ENCODE measurements at regions of chr4 and their contacts with region 1.

Region 1: GRCh38 chr4:70734168-70734954 is 12.6 kb downstream of the RUFY3 start:
- DNase-seq: peak in 9 of 10 donors; percentile 12 to 77 (median 45)
- ATAC-seq: peak; percentile 88 to 90
- H3K4me3 Mint-ChIP-seq: peak overlapping the region; percentile 66 to 81 (median 74)
- H3K27ac Mint-ChIP-seq: peak overlapping the region; percentile 51 to 93 (median 88)
- H3K4me1 Mint-ChIP-seq: peaks cover 15 to 53% (median 53%) of the 10 kb centered on the region in 4 donors
- H3K27me3 Mint-ChIP-seq: no peaks in the 10 kb centered on the region

Region 2: DNA sequence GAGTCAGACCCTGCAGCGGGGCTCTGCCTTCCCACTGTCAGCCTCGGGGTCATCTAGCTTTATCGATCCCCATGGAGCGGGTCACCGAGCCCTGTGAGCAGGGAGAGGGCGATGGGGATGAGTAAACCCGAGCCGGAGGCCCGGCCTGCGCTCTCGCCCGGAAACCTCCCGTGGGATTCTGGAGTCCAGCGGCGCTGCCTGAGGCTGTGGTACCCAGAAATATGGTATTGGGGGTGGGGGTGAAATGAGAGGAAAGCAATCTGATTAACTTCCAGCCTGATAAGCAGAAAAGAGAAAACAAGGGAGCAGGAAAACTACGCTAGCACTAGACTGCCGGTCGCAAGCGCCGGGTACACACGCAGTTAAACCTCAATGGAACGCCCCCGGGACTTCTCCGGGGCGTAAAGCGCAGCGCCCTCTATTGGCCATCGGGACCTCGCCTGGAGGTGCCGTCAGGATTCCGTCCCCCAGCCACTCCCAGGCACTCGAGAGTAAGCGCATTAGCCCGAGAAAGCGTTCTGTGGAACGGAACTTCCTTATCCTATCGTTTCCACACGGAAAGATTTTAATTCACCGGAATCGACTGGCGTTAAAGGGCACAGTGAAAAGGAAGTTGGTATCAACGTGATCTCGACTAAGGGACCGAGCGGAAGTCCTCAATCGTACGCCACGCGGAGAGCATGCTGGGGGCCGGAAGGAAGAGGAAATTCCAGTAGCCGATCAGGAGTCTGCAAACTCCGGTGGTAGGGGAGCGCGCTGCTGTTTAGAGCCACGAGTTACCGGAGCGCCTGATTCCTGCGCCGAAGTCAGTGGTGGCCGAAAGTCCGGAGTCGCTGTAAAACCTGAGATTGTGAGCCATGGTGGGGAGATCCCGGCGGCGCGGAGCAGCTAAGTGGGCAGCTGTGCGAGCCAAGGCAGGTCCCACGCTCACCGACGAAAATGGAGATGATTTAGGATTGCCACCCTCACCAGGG is 46.3 kb before region 1 on chr4 and contains the start of gene UTP3:
- POLR2A ChIA-PET with region 1: interaction called, 47 read pairs
- DNase-seq: peak; percentile 87 to 95 (median 91)
- ATAC-seq: peak; percentile 87 to 91
- H3K4me3 Mint-ChIP-seq: peak within 1 kb of the TSS; percentile 95 to 100 (median 98)
- H3K27ac Mint-ChIP-seq: peak within 1 kb of the TSS; percentile 98 to 100 (median 99)
- H3K4me1 Mint-ChIP-seq: peaks cover 19 to 52% (median 40%) of the 10 kb centered on the region in 4 donors
- H3K27me3 Mint-ChIP-seq: no peaks in the 10 kb centered on the region
- polyA plus RNA-seq, gene UTP3: 9.7 to 20.3 (median 13.9) TPM

Region 3: DNA sequence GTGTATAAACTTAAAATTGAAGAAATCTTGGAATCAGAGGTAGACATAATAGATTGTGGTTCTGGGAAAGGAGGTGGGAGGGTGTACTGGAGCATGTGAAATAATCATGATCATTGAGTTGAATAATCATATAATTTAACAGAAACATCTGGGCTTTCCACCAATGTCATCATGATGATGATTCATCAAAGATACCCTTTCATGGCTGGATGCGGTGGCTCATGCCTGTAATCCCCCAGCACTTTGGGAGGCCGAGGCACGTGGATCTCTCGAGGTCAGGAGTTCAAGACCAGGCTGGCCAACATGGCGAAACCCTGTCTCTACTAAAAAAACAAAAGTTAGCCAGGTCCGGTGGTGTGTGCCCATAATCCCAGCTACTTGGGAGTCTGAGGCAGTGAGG is 19.3 kb before region 1 on chr4:
- POLR2A ChIA-PET with region 1: interaction called, 11 read pairs
- DNase-seq: no peak
- ATAC-seq: no peak
- H3K4me3 Mint-ChIP-seq: no peak overlapping the region
- H3K27ac Mint-ChIP-seq: peak overlapping the region in 3 of 10 donors; percentile 21 to 55 (median 42)
- H3K4me1 Mint-ChIP-seq: peaks cover 10 to 52% (median 45%) of the 10 kb centered on the region in 4 donors
- H3K27me3 Mint-ChIP-seq: no peaks in the 10 kb centered on the region

Region 4: GRCh38 chr4:70721747-70722146 is 12.6 kb before region 1 on chr4 and contains the start of gene RUFY3:
- POLR2A ChIA-PET with region 1: interaction called, 12 read pairs
- DNase-seq: no peak
- ATAC-seq: no peak
- H3K4me3 Mint-ChIP-seq: peak within 1 kb of the TSS; percentile 3 to 65 (median 50)
- H3K27ac Mint-ChIP-seq: peak within 1 kb of the TSS; percentile 25 to 90 (median 80)
- H3K4me1 Mint-ChIP-seq: peaks cover 8 to 31% (median 25%) of the 10 kb centered on the region in 4 donors
- H3K27me3 Mint-ChIP-seq: no peaks in the 10 kb centered on the region
- polyA plus RNA-seq, gene RUFY3: 8.4 to 9.3 (median 8.6) TPM

Measured in naive thymus-derived CD8-positive, alpha-beta T cell (primary cell).